ENCODE measurements at regions of chr3 and their contacts with region 1.

Region 1: DNA sequence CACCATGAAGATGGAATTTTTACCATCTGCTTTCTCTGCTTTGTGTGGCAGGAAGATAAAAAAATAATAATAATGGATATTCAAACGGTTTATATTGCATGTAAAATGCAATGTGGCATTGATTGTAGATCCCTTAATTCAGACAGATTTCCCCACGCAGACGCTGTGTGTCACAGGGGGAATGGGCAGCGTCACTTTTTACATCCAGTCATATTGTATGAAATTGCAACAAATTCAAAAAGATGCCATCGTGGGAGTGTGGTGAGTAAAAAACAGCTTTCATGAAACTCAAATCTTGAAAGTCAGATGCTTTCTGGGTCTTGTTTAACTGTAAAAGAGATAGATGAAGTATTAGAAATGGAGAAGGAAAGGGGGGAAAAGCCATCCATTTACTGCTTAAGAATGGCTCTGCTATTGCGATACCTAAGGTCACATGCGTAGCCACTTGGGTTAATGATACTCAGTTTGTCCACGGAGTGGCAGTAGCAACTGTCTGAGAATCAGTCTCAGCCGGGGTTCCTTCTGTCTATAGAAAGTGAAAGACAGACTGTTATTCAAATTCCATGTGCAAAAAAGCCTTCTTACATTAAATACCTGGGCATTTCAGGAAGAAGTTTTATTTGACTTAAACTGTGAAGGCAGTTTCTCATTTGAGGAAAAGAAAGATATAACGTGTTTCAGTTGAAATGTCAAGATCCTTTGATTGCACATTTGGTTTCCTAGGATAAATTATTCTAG is 28.5 kb downstream of the BTD start:
- DNase-seq: peak; percentile 83
- ATAC-seq: peak; percentile 98
- H3K4me3 ChIP-seq: peak overlapping the region; percentile 65; the same call in 1 of the 2 replicates
- H3K27ac ChIP-seq: peak overlapping the region; percentile 51
- H3K4me1 ChIP-seq: peaks cover 12% of the 10 kb centered on the region
- H3K27me3 ChIP-seq: no peaks in the 10 kb centered on the region
- CTCF ChIP-seq: peak; percentile 66 to 88 (median 82)
- EP300 ChIP-seq: no peak
- POLR2A ChIP-seq: no peak
- RAD21 ChIP-seq: peak; percentile 91

Region 2: DNA sequence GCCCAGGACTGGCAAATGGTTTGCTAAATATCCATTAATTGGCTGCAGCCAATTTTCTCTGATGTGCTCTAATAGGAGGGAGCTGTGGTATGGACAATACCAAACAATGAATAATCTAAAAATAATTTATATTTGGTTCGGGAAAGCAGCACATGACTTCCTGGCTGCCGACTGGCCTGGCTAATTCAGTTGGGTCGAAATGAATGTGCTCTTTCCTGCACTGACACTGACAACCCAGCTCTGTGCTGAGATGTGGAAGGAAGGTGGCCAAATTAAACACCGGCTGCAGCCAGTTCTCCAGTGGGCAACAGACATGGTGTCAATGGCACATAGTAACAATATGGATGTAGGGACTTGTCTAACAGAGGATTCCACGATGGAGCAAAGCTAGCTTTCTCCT is 87.4 kb before region 1 on chr3:
- CTCF ChIA-PET with region 1: no interaction called
- POLR2A ChIA-PET with region 1: no interaction called
- RAD21 ChIA-PET with region 1: no interaction called
- SMC1A ChIA-PET with region 1: no interaction called
- in situ Hi-C with region 1: no loop called
- intact Hi-C with region 1: no loop called
- DNase-seq: no peak
- ATAC-seq: no peak
- H3K4me3 ChIP-seq: no peak overlapping the region
- H3K27ac ChIP-seq: no peak overlapping the region
- H3K4me1 ChIP-seq: no peaks in the 10 kb centered on the region
- H3K27me3 ChIP-seq: no peaks in the 10 kb centered on the region
- CTCF ChIP-seq: no peak
- EP300 ChIP-seq: no peak
- POLR2A ChIP-seq: no peak
- RAD21 ChIP-seq: no peak

Region 3: DNA sequence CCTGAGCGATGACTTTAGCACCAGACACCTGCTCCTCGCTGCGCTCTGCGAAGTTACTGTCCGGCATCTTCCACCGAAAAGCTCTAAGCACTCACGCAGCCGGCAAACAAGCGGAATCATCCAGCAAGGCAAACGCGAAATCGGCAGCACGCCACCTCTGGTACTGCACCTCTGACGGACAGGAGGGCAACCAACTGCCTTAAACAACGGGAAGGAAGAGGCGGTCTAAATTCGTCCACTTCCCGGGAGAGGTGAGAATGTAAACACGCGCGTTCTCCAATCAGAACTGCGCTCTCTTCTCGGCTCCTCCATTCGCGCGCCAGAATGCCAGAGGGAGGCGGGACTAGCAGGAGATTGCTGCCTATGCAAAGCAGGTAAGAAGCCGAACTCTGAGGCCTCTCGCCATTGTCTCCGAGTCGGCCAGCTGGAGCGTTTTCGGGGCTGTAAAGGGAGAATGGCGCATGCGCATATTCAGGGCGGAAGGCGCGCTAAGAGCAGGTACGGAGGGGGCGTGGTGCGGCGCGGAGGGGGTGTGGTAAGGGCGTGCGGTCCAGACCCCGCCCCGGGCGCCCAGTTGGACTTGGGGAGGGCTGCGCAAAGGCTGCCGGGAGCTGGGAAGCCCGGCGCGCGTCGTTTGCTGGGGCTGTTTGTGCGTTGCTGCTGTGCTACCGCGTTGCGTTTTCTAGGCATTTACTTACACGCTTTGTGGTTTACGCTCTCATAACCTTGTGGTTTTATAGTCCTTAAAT is 28.5 kb before region 1 on chr3 and contains the starts of genes BTD and HACL1:
- CTCF ChIA-PET with region 1: interaction called, 3 read pairs
- POLR2A ChIA-PET with region 1: interaction called, 4 read pairs
- RAD21 ChIA-PET with region 1: interaction called, 12 read pairs
- SMC1A ChIA-PET with region 1: interaction called, 12 read pairs
- in situ Hi-C with region 1: no loop called
- intact Hi-C with region 1: no loop called
- DNase-seq: peak; percentile 99
- ATAC-seq: peak; percentile 96
- H3K4me3 ChIP-seq: peak within 1 kb of the TSS; percentile 91
- H3K27ac ChIP-seq: peak within 1 kb of the TSS; percentile 81
- H3K4me1 ChIP-seq: no peaks in the 10 kb centered on the region; the same call in 1 of the 2 replicates
- H3K27me3 ChIP-seq: no peaks in the 10 kb centered on the region
- CTCF ChIP-seq: peak in 2 of 3 experiments; percentile 28 to 40; a peak in 5 of 6 replicates
- EP300 ChIP-seq: no peak
- POLR2A ChIP-seq: peak; percentile 86
- RAD21 ChIP-seq: no peak
- polyA plus RNA-seq, gene BTD: 6.1 to 9.2 TPM
- polyA plus RNA-seq, gene HACL1: 34.1 to 40.3 TPM

Region 4: GRCh38 chr3:15667484-15667883 is 37.5 kb after region 1 on chr3:
- CTCF ChIA-PET with region 1: interaction called, 9 read pairs
- POLR2A ChIA-PET with region 1: no interaction called
- RAD21 ChIA-PET with region 1: interaction called, 12 read pairs
- SMC1A ChIA-PET with region 1: interaction called, 16 read pairs
- in situ Hi-C with region 1: no loop called
- intact Hi-C with region 1: loop called (anchors 5 kb)
- DNase-seq: peak; percentile 45
- ATAC-seq: peak; percentile 88
- H3K4me3 ChIP-seq: no peak overlapping the region
- H3K27ac ChIP-seq: no peak overlapping the region; the same call in 1 of the 2 replicates
- H3K4me1 ChIP-seq: peaks cover 3% of the 10 kb centered on the region; the same call in 1 of the 2 replicates
- H3K27me3 ChIP-seq: no peaks in the 10 kb centered on the region
- CTCF ChIP-seq: no peak
- EP300 ChIP-seq: 0 out of 4 replicates have a peak, but pooled peaks of 1 of the 2 experiments have one; percentile 47
- POLR2A ChIP-seq: no peak
- RAD21 ChIP-seq: no peak

Region 5: GRCh38 chr3:15713364-15713763 is 83.3 kb after region 1 on chr3:
- CTCF ChIA-PET with region 1: interaction called, 23 read pairs
- POLR2A ChIA-PET with region 1: no interaction called
- RAD21 ChIA-PET with region 1: interaction called, 26 read pairs
- SMC1A ChIA-PET with region 1: interaction called, 31 read pairs
- in situ Hi-C with region 1: no loop called
- intact Hi-C with region 1: no loop called
- DNase-seq: no peak
- ATAC-seq: peak; percentile 81
- H3K4me3 ChIP-seq: no peak overlapping the region
- H3K27ac ChIP-seq: no peak overlapping the region
- H3K4me1 ChIP-seq: no peaks in the 10 kb centered on the region; the same call in 1 of the 2 replicates
- H3K27me3 ChIP-seq: no peaks in the 10 kb centered on the region
- CTCF ChIP-seq: no peak
- EP300 ChIP-seq: no peak
- POLR2A ChIP-seq: no peak
- RAD21 ChIP-seq: no peak

Region 6: DNA sequence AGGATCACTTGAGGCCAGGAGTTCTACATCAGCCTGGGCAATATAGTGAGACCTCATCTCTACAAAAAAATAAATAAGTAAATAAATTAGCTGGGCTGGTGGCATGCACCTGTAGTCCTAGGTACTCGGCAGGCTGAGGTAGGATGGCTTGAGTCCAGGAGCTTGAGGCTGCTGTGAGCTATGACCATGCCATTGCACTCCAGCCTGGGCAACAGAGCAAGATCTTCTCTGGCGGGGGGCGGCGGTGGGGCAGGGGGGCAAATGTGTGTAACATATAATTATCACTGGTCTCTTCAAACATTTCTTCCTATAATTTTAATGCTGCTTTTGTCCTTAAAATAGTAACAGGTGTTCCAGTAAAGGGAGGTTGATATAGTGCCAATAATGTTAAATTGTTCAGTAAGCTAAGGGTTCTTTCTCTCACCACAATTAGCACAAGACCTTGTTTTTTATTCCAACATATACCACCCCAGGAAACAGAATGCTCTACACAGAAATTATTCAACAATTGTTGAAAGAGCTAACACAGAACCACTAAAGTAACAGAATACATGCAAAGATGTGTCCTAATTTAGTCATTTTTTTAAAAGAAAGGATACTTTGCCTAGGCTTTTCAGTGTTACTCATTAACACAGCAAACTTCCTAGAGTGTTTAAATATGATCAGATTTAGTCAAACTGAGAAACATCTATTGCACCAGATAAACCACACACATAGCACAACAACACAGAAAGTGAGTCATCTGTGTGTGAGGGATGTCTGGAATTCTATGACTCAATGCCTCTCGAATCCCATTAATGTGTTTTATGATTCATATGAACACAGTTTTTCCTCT is 138.6 kb after region 1 on chr3:
- CTCF ChIA-PET with region 1: interaction called, 10 read pairs
- POLR2A ChIA-PET with region 1: interaction called, 3 read pairs
- RAD21 ChIA-PET with region 1: no interaction called
- SMC1A ChIA-PET with region 1: interaction called, 9 read pairs
- in situ Hi-C with region 1: no loop called
- intact Hi-C with region 1: no loop called
- DNase-seq: peak; percentile 65
- ATAC-seq: peak; percentile 82
- H3K4me3 ChIP-seq: peak overlapping the region; percentile 21; the same call in 1 of the 2 replicates
- H3K27ac ChIP-seq: peak overlapping the region; percentile 45
- H3K4me1 ChIP-seq: peaks cover 23% of the 10 kb centered on the region
- H3K27me3 ChIP-seq: no peaks in the 10 kb centered on the region
- CTCF ChIP-seq: no peak
- EP300 ChIP-seq: peak; percentile 81 to 82; a peak in 3 of 4 replicates
- POLR2A ChIP-seq: no peak
- RAD21 ChIP-seq: no peak

Region 7: GRCh38 chr3:15805756-15806266 is 175.8 kb after region 1 on chr3:
- CTCF ChIA-PET with region 1: interaction called, 288 read pairs
- POLR2A ChIA-PET with region 1: interaction called, 12 read pairs
- RAD21 ChIA-PET with region 1: interaction called, 248 read pairs
- SMC1A ChIA-PET with region 1: interaction called, 362 read pairs
- in situ Hi-C with region 1: loop called (anchors 5 kb)
- intact Hi-C with region 1: no loop called
- DNase-seq: peak; percentile 89
- ATAC-seq: peak; percentile 71
- H3K4me3 ChIP-seq: peak overlapping the region; percentile 49
- H3K27ac ChIP-seq: peak overlapping the region; percentile 84
- H3K4me1 ChIP-seq: peaks cover 75% of the 10 kb centered on the region
- H3K27me3 ChIP-seq: no peaks in the 10 kb centered on the region
- CTCF ChIP-seq: no peak; a peak in 1 of 6 replicates
- EP300 ChIP-seq: peak; percentile 96 to 99
- POLR2A ChIP-seq: no peak
- RAD21 ChIP-seq: no peak

Region 8: GRCh38 chr3:16247276-16248061 is 617.4 kb after region 1 on chr3:
- CTCF ChIA-PET with region 1: interaction called, 5 read pairs
- POLR2A ChIA-PET with region 1: no interaction called
- RAD21 ChIA-PET with region 1: interaction called, 4 read pairs
- SMC1A ChIA-PET with region 1: no interaction called
- in situ Hi-C with region 1: loop called (anchors 10 kb)
- intact Hi-C with region 1: loop called (anchors 1 kb)
- DNase-seq: peak; percentile 43
- ATAC-seq: peak; percentile 94
- H3K4me3 ChIP-seq: no peak overlapping the region
- H3K27ac ChIP-seq: no peak overlapping the region
- H3K4me1 ChIP-seq: peaks cover 7% of the 10 kb centered on the region
- H3K27me3 ChIP-seq: no peaks in the 10 kb centered on the region
- CTCF ChIP-seq: peak; percentile 84 to 97 (median 90)
- EP300 ChIP-seq: peak; percentile 29 to 50; a peak in 1 of 4 replicates
- POLR2A ChIP-seq: no peak
- RAD21 ChIP-seq: peak; percentile 94

Measured in GM12878 (cell line).